ENCODE measurements at regions of chr5 and their contacts with region 1.

Region 1: GRCh38 chr5:42908509-42909488 is 97.1 kb upstream of the SELENOP start:
- DNase-seq: peak; percentile 78 to 96 (median 90)
- ATAC-seq: peak; percentile 91
- H3K4me3 ChIP-seq: peak overlapping the region; percentile 65 to 71
- H3K4me3 Mint-ChIP-seq: peak overlapping the region; percentile 93
- H3K27ac ChIP-seq: peak overlapping the region; percentile 57 to 60
- H3K27ac Mint-ChIP-seq: peak overlapping the region; percentile 95
- H3K4me1 ChIP-seq: peaks cover 9% of the 10 kb centered on the region
- H3K4me1 Mint-ChIP-seq: peaks cover 14% of the 10 kb centered on the region
- H3K27me3 ChIP-seq: no peaks in the 10 kb centered on the region
- H3K27me3 Mint-ChIP-seq: peaks cover 2% of the 10 kb centered on the region
- CTCF ChIP-seq: peak; percentile 86

Region 2: GRCh38 chr5:42889311-42889933 is 19.4 kb before region 1 on chr5:
- CTCF ChIA-PET with region 1: interaction called, 18 read pairs
- POLR2A ChIA-PET with region 1: interaction called, 4 read pairs
- intact Hi-C with region 1: no loop called
- DNase-seq: peak; percentile 31 to 75 (median 59)
- ATAC-seq: peak; percentile 79
- H3K4me3 ChIP-seq: no peak overlapping the region
- H3K4me3 Mint-ChIP-seq: no peak overlapping the region
- H3K27ac ChIP-seq: no peak overlapping the region
- H3K27ac Mint-ChIP-seq: no peak overlapping the region
- H3K4me1 ChIP-seq: no peaks in the 10 kb centered on the region
- H3K4me1 Mint-ChIP-seq: no peaks in the 10 kb centered on the region
- H3K27me3 ChIP-seq: no peaks in the 10 kb centered on the region
- H3K27me3 Mint-ChIP-seq: peaks cover 7% of the 10 kb centered on the region
- CTCF ChIP-seq: peak; percentile 84

Region 3: DNA sequence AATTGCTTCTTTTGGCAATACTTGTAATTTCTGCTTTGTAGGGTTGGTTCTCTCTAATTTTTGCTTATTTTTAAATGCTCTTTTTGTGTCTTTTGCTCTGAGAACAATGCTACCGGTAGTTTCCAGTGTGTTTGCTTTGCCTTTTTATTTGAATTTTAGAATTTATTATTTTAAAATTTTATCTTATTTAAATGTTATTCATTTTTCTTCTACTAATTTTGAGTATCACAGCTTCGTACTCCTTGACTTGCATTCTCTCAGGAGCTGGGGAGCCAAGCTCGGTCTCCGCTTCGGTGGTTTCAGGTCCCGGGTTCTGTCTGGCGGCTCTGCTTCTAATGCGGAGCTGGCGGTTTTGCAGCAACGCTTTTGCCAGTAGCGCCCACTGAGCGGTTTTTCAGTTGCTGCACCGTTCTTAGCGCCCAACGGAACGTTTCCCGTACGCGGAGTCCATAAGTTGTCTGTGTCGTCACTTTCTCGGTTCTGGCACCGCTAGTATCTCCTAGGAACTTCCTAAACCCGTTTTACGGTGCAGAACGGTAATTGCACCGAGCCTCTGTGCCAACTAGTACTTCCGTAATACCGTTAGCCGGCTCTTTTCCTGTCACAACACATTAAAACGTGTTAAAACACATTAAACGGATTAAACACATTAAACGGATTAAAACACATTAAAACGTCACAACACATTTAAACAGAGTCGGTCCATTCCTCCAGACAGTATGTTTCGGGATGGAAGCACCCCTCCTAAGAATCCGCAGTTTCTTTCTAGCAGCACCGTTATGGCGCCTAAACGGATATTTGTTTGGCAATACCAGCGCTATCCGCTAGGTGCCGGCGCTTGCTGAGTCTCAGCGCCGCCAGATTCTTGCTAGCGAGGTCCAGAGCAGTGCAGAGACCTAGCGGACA is 85.7 kb after region 1 on chr5:
- CTCF ChIA-PET with region 1: interaction called, 88 read pairs
- POLR2A ChIA-PET with region 1: interaction called, 89 read pairs
- intact Hi-C with region 1: loop called (anchors 1 to 5 kb)
- DNase-seq: peak; percentile 75 to 94 (median 88)
- ATAC-seq: peak; percentile 63
- H3K4me3 ChIP-seq: peak overlapping the region; percentile 78 to 92
- H3K4me3 Mint-ChIP-seq: peak overlapping the region; percentile 99
- H3K27ac ChIP-seq: peak overlapping the region; percentile 97
- H3K27ac Mint-ChIP-seq: peak overlapping the region; percentile 100
- H3K4me1 ChIP-seq: peaks cover 23% of the 10 kb centered on the region
- H3K4me1 Mint-ChIP-seq: peaks cover 41% of the 10 kb centered on the region
- H3K27me3 ChIP-seq: no peaks in the 10 kb centered on the region
- H3K27me3 Mint-ChIP-seq: no peaks in the 10 kb centered on the region
- CTCF ChIP-seq: peak; percentile 93

Region 4: GRCh38 chr5:43019614-43020293 is 111.0 kb after region 1 on chr5:
- CTCF ChIA-PET with region 1: interaction called, 51 read pairs
- POLR2A ChIA-PET with region 1: interaction called, 79 read pairs
- intact Hi-C with region 1: loop called in 1 of 2 experiments (anchors 5 kb)
- DNase-seq: peak; percentile 69 to 96 (median 84)
- ATAC-seq: peak; percentile 66
- H3K4me3 ChIP-seq: peak overlapping the region; percentile 70 to 73
- H3K4me3 Mint-ChIP-seq: peak overlapping the region; percentile 98
- H3K27ac ChIP-seq: peak overlapping the region; percentile 97 to 98
- H3K27ac Mint-ChIP-seq: peak overlapping the region; percentile 100
- H3K4me1 ChIP-seq: peaks cover 40% of the 10 kb centered on the region
- H3K4me1 Mint-ChIP-seq: peaks cover 43% of the 10 kb centered on the region
- H3K27me3 ChIP-seq: no peaks in the 10 kb centered on the region
- H3K27me3 Mint-ChIP-seq: no peaks in the 10 kb centered on the region
- CTCF ChIP-seq: peak; percentile 71

Region 5: GRCh38 chr5:43105369-43106289 is 196.8 kb after region 1 on chr5:
- CTCF ChIA-PET with region 1: interaction called, 15 read pairs
- POLR2A ChIA-PET with region 1: interaction called, 4 read pairs
- intact Hi-C with region 1: loop called (anchors 1 kb)
- DNase-seq: peak; percentile 81 to 96 (median 91)
- ATAC-seq: peak; percentile 94
- H3K4me3 ChIP-seq: peak overlapping the region; percentile 55 to 56
- H3K4me3 Mint-ChIP-seq: peak overlapping the region; percentile 84
- H3K27ac ChIP-seq: peak overlapping the region in 1 of 2 experiments; percentile 58
- H3K27ac Mint-ChIP-seq: peak overlapping the region; percentile 84
- H3K4me1 ChIP-seq: peaks cover 27% of the 10 kb centered on the region
- H3K4me1 Mint-ChIP-seq: peaks cover 35% of the 10 kb centered on the region
- H3K27me3 ChIP-seq: no peaks in the 10 kb centered on the region
- H3K27me3 Mint-ChIP-seq: no peaks in the 10 kb centered on the region
- CTCF ChIP-seq: peak; percentile 100

Region 6: GRCh38 chr5:43389679-43390329 is 481.0 kb after region 1 on chr5:
- CTCF ChIA-PET with region 1: interaction called, 10 read pairs
- POLR2A ChIA-PET with region 1: no interaction called
- intact Hi-C with region 1: loop called (anchors 1 to 5 kb)
- DNase-seq: peak in 7 of 9 experiments; percentile 11 to 73 (median 43)
- ATAC-seq: peak; percentile 64
- H3K4me3 ChIP-seq: no peak overlapping the region
- H3K4me3 Mint-ChIP-seq: no peak overlapping the region
- H3K27ac ChIP-seq: no peak overlapping the region
- H3K27ac Mint-ChIP-seq: no peak overlapping the region
- H3K4me1 ChIP-seq: no peaks in the 10 kb centered on the region
- H3K4me1 Mint-ChIP-seq: peaks cover 35% of the 10 kb centered on the region
- H3K27me3 ChIP-seq: no peaks in the 10 kb centered on the region
- H3K27me3 Mint-ChIP-seq: no peaks in the 10 kb centered on the region
- CTCF ChIP-seq: peak; percentile 87

Region 7: DNA sequence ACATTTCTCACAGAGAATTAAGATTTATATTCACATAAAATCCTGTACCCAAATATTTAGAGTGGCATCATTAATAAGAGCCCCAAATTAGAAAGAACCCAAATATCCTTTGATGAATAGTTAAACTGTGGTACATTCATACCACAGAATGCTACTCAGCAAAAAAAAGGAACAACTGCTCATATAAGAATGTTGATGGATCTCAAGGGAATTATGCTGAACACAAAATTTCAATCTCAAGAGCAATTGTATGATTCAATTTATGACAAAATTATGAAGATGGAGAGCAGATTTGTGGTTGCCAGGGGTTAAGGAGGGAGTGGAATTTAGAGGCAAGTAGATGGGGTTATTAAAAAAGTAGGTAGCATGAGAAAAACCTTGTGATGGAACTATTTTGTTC is 652.6 kb after region 1 on chr5:
- CTCF ChIA-PET with region 1: no interaction called
- POLR2A ChIA-PET with region 1: no interaction called
- intact Hi-C with region 1: no loop called
- DNase-seq: no peak
- ATAC-seq: no peak
- H3K4me3 ChIP-seq: no peak overlapping the region
- H3K4me3 Mint-ChIP-seq: no peak overlapping the region
- H3K27ac ChIP-seq: no peak overlapping the region
- H3K27ac Mint-ChIP-seq: no peak overlapping the region
- H3K4me1 ChIP-seq: peaks cover 5% of the 10 kb centered on the region
- H3K4me1 Mint-ChIP-seq: peaks cover 10% of the 10 kb centered on the region
- H3K27me3 ChIP-seq: no peaks in the 10 kb centered on the region
- H3K27me3 Mint-ChIP-seq: peaks cover 5% of the 10 kb centered on the region
- CTCF ChIP-seq: no peak

Measured in CD8-positive, alpha-beta T cell (primary cell).